Left cardiac atrium (tissue), 4 donors: ENCODE measurements at regions of chr5 and their contacts with region 1.

Region 1: DNA sequence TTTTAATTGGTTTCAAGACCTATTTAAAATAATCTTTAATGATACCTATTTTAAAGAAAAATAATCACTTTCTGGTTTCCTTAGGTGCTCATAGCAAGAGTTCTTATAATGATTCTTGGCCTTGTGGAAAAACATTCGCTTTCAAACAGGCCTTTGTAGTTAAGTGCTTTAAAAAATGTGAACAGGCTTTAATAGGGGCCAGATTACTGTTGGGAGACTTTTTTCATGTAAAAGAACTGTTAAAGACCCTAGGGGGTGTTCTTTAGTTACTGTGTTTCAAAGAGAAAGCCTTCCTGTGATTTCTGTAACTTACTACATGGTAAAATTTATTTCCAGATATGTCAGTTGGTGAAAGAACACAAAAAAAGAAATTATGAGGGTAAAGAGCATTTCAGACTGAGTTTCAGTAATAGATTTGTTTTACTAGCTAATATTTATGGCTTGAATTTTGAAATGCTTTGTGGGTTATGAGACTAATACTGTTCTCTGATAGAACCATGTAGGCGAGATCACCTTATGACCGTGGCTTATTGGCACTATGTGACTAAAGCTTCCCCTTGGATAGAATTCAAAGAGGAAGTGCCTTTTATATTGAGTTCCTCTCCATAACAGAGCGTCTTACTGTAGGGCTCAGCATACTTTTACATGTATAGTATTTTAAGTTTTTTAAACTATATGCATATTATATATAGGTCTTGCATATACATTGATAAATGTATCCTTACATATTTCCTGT is 70.7 kb downstream of the CSNK1G3 start:
- DNase-seq: no peak
- ATAC-seq: peak in 1 of 2 donors; percentile 31

Region 2: GRCh38 chr5:123511648-123512605 is 70.8 kb before region 1 on chr5 and contains the start of gene CSNK1G3:
- intact Hi-C with region 1: loop called in 1 of 2 experiments (anchors 10 kb)
- DNase-seq: peak; percentile 98
- ATAC-seq: peak; percentile 98
- total RNA-seq, gene CSNK1G3: 27.1 to 28.6 TPM

Region 3: GRCh38 chr5:124783285-124783684 is 1200.6 kb after region 1 on chr5:
- intact Hi-C with region 1: no loop called
- DNase-seq: no peak
- ATAC-seq: no peak